ENCODE measurements at regions of chr2 and their contacts with region 1.

Region 1: DNA sequence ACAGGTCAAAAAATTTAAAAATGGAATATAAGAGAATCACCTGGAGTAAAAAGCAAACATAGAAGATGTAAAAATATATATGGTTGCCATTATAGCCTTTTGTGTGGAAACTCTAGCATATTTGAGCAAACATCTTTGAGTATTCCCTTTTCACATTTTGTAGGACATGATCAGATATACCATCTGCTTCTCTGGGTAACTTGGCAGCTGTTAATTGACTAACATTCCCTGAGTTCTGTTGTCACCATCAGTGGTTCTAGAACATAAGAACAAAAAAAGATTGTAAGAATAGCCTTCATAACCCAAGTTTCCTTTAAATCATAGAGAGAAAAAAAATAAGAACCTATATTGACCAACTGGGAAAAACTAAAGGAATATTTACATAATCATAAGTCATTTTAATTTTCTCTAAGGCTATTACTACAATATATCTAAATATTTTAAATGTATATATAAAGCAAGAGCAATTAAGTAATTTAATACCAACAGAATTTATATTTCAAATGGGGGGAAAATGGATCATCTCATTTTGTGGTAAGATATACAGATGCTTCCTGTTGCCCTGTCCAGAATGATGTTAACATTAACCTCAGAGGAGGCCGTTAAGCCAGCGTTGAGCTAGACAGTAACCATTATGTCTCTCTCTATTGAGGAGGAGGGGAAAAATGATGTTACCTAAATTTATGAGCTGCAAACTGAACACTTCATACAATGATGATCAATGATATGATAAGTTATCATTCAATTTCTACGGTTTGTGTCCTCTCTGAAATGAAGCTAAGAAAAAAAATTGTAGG is 9.8 kb upstream of the INO80D start:
- DNase-seq: no peak
- ATAC-seq: no peak

Region 2: DNA sequence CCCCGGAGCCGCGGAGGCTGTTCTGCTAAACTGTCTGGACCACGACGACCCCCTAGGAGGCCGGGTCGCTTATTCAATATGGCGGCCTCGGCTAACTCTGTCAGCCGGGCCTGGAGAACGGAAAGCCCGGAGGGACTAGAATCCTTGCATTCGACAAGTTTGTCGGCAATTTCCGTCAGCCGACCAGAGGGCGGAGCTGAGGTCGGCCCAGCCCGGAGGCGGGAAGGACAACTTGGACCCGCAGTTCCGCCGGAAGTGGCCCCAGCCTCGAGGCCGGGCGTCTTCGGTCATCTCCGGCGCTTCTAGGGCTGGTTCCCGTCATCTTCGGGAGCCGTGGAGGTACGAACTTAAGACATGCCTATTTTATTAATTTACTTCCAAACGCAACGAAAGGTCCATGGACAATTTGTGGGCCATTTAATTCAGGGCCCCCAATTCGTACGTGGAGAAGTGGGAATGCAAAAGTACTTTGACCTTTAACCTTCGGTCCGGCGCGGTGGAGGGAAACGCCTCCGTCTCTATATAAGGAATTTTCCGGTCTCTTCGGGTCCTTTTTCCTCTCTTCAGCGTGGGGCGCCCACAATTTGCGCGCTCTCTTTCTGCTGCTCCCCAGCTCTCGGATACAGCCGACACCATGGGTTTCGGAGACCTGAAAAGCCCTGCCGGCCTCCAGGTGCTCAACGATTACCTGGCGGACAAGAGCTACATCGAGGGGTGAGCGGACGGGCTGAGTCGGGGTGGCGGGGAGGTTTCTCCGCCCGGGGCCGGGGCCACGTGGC is 63.8 kb after region 1 on chr2 and contains the starts of genes EEF1B2 and NDUFS1:
- intact Hi-C with region 1: loop called in 1 of 2 experiments (anchors 10 kb)
- DNase-seq: peak; percentile 96 to 97
- ATAC-seq: peak; percentile 91
- total RNA-seq, gene EEF1B2: 441 to 460 TPM
- total RNA-seq, gene NDUFS1: 169 to 190 TPM

Measured in left colon (tissue), 2 donors.